Activated CD4-positive, alpha-beta T cell treated with anti-CD3 and anti-CD28 coated beads for 36 hours (primary cell): ENCODE measurements at regions of chr1 and their contacts with region 1.

Region 1: DNA sequence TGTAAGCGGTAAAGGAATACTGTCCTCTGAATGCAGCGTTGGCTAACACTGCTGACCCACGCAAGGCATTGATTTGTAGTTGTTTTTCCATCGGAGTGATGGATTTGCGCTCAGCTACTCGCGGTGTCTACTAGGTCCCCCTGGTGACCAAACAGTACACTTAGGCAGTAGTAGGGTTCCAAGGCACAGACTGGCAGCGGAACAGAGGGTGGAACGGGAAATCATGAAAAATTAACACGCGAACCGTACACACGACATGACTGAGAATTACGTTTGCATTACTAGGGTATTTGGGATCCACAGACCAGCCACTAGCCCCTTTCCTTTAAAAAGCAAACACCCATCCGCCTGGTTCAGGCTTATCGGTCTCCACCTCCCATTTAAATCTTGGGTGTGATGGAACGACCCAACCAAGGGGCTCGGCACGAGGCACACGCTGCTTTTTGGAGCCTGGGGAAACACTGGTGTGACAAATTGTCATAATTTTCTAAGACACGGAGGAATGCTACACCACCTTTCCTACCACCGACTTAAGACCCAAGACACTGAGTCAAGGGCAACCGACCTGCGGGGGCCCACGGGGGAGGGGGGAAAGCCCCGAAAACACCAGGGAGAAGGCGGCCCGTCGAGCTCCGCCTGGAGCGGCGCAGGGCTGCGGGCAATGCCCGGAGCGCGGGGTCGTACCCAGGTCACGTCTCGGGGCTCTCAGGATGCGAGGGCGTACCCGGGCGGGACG is 699 bp downstream of the DIPK1A start:
- DNase-seq: peak; percentile 78
- ATAC-seq: peak; percentile 62
- H3K4me3 Mint-ChIP-seq: peak overlapping the region; percentile 94
- H3K27ac Mint-ChIP-seq: peak overlapping the region; percentile 95
- H3K4me1 Mint-ChIP-seq: peaks cover 36% of the 10 kb centered on the region
- H3K27me3 Mint-ChIP-seq: no peaks in the 10 kb centered on the region

Region 2: DNA sequence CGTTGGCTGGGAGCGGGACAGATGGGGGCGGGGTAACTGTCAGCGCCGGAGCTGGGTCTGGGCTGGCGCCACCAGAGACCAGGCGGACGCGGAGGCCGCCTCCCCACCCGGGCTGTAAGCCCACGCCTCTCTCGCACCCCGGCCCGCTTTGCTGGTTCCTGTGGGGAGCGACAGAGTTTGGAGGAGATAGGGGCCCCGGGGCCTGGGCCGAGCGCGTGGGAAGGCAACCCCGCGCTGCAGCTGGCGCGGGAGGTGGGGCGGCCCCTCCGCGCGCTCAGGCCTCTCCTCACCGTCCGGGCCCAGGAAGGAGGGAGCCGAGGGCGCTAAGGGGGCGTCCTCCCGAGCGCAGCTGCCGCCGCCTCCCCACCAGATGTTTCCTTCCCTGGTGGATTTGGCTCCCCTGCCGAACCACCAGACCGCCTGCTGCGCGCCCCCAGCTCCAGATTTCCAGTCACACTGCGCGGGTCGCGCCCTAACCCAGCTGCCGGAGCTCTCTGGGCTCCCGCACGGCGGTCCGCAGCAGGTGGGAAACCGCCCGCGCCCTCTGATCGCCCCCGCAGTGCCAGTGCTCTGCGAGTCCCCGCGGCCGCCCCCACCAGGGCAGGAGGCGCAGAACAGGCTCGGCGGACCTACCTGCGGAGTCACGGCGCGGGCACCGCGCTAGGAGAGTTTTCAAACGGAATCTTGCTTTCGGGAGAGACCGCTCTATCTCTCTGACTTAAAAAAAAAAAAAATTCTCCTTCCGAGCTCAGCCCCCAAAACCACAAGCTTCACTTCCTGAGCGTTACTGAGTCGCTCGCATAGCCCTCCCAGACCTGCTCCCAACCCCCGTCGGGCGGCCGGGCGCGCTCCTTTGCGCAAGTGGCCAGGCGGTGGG is 474.9 kb before region 1 on chr1:
- CTCF ChIA-PET with region 1: interaction called, 3 read pairs
- POLR2A ChIA-PET with region 1: no interaction called
- intact Hi-C with region 1: loop called in 1 of 2 experiments (anchors 5 kb)
- DNase-seq: peak; percentile 95
- ATAC-seq: peak; percentile 58
- H3K4me3 Mint-ChIP-seq: peak overlapping the region; percentile 98
- H3K27ac Mint-ChIP-seq: peak overlapping the region; percentile 97
- H3K4me1 Mint-ChIP-seq: peaks cover 30% of the 10 kb centered on the region
- H3K27me3 Mint-ChIP-seq: no peaks in the 10 kb centered on the region

Region 3: GRCh38 chr1:92784639-92785500 is 175.7 kb before region 1 on chr1 and contains the start of gene EVI5:
- CTCF ChIA-PET with region 1: no interaction called
- POLR2A ChIA-PET with region 1: no interaction called
- intact Hi-C with region 1: loop called in 1 of 2 experiments (anchors 1 kb)
- DNase-seq: peak; percentile 77
- ATAC-seq: peak; percentile 83
- H3K4me3 Mint-ChIP-seq: peak within 1 kb of the TSS; percentile 71
- H3K27ac Mint-ChIP-seq: no peak within 1 kb of the TSS
- H3K4me1 Mint-ChIP-seq: peaks cover 13% of the 10 kb centered on the region
- H3K27me3 Mint-ChIP-seq: peaks cover 32% of the 10 kb centered on the region
- total RNA-seq, gene EVI5: 28.5 to 32.6 TPM

Region 4: GRCh38 chr1:92877792-92878191 is 82.8 kb before region 1 on chr1:
- CTCF ChIA-PET with region 1: interaction called, 5 read pairs
- POLR2A ChIA-PET with region 1: interaction called, 3 read pairs
- intact Hi-C with region 1: loop called in 1 of 2 experiments (anchors 5 kb)
- DNase-seq: no peak
- ATAC-seq: peak; percentile 60
- H3K4me3 Mint-ChIP-seq: peak overlapping the region; percentile 56
- H3K27ac Mint-ChIP-seq: peak overlapping the region; percentile 83
- H3K4me1 Mint-ChIP-seq: peaks cover 33% of the 10 kb centered on the region
- H3K27me3 Mint-ChIP-seq: no peaks in the 10 kb centered on the region

Region 5: DNA sequence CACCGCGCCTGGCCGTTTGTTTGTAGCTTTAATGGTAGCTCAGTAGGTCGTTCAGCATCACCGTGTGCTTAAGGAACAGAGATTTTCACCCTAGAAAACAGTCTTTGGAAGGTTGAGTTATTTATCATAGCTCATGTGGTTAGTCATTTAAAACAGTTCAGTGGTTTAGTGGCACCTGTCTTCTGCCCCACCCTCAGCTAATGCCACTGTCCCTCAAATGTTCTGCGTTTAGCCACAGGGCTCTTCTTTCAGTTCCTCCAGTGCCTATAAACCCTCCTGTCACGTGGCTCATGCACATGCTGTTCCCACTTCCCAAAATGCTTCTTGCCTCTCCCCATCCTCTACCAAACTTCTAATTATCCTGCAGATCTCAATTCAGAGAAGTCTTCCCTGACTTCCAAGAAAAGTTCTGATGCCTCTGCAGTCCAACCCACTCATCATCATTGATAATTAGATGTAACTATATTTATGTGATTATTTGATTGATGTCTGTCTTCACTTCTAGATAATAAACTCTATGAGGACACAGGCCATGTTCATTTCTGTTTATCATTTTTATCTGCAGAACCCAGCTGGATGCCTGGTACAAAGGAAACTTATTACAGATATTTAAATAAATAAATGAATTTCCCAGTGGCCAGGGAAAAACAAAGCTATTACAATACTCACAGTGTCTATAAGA is 15.1 kb after region 1 on chr1:
- CTCF ChIA-PET with region 1: interaction called, 34 read pairs
- POLR2A ChIA-PET with region 1: interaction called, 12 read pairs
- intact Hi-C with region 1: loop called in 1 of 2 experiments (anchors 2 kb)
- DNase-seq: peak; percentile 24
- ATAC-seq: peak; percentile 32
- H3K4me3 Mint-ChIP-seq: no peak overlapping the region
- H3K27ac Mint-ChIP-seq: peak overlapping the region; percentile 35
- H3K4me1 Mint-ChIP-seq: peaks cover 69% of the 10 kb centered on the region
- H3K27me3 Mint-ChIP-seq: no peaks in the 10 kb centered on the region

Region 6: DNA sequence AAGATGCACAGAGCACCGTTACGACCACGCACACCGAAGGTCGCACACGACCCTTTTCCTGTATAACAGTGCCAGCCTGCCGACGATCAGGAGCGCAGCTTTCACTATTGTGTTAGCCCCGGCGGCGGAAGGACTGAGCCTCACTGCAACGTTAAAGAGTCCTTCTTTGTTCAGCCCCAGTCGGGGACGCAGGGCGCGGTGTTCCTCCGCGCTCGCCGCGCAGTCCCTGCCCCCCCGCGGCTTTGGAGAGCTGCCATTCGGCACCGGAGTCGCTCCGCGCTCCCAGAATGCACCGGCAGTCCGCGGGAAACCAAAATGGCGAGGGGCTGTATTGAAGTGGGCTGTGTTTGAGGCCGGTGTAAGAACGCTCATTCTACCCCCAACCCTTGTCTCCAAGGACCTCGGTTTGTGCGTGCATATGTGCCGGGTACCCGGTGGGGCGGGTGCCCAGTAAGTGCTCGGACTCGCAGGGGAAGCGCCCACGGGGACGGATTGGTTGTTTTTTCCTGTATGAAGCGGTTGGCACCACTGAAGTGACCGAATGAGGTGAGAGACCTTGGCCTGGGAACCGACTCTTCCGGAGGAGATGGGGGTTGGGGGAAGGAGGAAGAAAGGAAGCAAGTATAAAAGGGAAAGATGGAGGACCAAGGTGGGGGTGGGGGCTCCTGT is 118.6 kb after region 1 on chr1 and contains the start of gene MTF2:
- CTCF ChIA-PET with region 1: interaction called, 5 read pairs
- POLR2A ChIA-PET with region 1: interaction called, 16 read pairs
- intact Hi-C with region 1: loop called (anchors 2 kb)
- DNase-seq: peak; percentile 97
- ATAC-seq: peak; percentile 91
- H3K4me3 Mint-ChIP-seq: peak within 1 kb of the TSS; percentile 94
- H3K27ac Mint-ChIP-seq: peak within 1 kb of the TSS; percentile 94
- H3K4me1 Mint-ChIP-seq: peaks cover 29% of the 10 kb centered on the region
- H3K27me3 Mint-ChIP-seq: no peaks in the 10 kb centered on the region
- total RNA-seq, gene MTF2: 49.8 to 55.0 TPM